CD8-positive, alpha-beta T cell (primary cell): ENCODE measurements at regions of chr6 and their contacts with region 1.

Region 1: GRCh38 chr6:26216356-26216885 is 129.2 kb downstream of the HFE start:
- DNase-seq: peak; percentile 61 to 96 (median 73)
- ATAC-seq: peak; percentile 79
- H3K4me3 ChIP-seq: peak overlapping the region; percentile 71 to 74
- H3K4me3 Mint-ChIP-seq: no peak overlapping the region
- H3K27ac ChIP-seq: peak overlapping the region; percentile 82 to 91
- H3K27ac Mint-ChIP-seq: no peak overlapping the region
- H3K4me1 ChIP-seq: peaks cover 19% of the 10 kb centered on the region
- H3K4me1 Mint-ChIP-seq: peaks cover 14% of the 10 kb centered on the region
- H3K27me3 ChIP-seq: no peaks in the 10 kb centered on the region
- H3K27me3 Mint-ChIP-seq: no peaks in the 10 kb centered on the region
- CTCF ChIP-seq: no peak

Region 2: DNA sequence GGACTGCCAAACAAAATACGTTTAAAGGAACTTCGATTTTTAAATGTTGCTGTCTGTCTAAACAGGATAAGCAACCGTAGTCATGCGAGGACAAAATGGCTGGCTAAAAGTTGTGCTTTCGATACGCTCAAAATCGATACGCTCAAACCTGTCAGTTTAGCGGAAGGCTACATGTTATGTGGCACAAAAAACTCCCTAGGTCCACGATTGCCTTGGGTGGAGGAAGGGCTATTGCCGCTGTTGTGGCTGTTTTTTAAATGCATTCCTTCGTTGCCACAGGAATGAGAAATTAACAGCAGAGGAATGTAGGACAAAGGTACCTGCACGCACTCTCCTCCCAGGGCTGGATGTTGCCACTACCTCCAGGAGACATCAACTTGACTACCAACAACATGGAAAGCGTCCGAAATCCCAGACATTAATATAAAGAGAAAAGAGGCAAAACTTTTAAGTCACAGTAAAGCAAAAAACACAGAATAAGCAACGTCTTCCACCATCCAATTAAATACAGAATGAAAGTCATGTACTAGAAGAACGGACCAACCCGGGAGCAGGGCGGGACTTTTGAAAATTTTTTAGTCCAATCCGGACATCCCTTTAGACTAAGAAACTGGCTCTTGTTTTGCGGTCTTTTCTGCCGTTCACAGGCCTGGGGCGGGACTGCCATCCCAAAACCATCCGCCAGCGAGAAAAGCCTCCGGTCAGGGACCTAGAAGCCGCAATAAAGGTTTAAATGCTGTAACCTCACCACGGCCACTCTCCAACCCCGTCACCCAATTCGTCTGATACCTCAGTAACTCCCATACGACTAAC is 161.4 kb before region 1 on chr6:
- CTCF ChIA-PET with region 1: no interaction called
- POLR2A ChIA-PET with region 1: interaction called, 21 read pairs
- intact Hi-C with region 1: no loop called
- DNase-seq: peak; percentile 71 to 94 (median 88)
- ATAC-seq: peak; percentile 72
- H3K4me3 ChIP-seq: peak overlapping the region; percentile 75 to 85
- H3K4me3 Mint-ChIP-seq: peak overlapping the region; percentile 96
- H3K27ac ChIP-seq: peak overlapping the region; percentile 85 to 96
- H3K27ac Mint-ChIP-seq: peak overlapping the region; percentile 99
- H3K4me1 ChIP-seq: peaks cover 17% of the 10 kb centered on the region
- H3K4me1 Mint-ChIP-seq: peaks cover 23% of the 10 kb centered on the region
- H3K27me3 ChIP-seq: no peaks in the 10 kb centered on the region
- H3K27me3 Mint-ChIP-seq: no peaks in the 10 kb centered on the region
- CTCF ChIP-seq: no peak

Region 3: DNA sequence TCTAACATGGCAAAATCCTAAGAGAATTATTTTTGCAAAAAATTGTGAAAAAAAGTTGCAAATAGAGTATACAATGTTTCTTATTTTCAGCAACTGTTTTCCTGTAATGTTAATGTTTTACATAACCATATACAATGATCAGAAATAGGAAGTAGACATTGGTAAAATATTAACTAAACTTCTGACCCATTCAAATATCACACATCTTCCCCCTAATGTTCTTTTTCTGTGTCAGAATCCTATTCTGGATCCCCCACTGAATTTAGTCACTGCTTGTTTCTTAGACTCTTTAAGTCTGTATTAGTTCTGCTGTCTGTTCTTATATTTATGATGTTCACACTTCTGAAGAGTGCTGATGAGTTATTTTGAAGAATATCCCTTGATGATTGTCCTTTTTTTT is 67.2 kb before region 1 on chr6:
- CTCF ChIA-PET with region 1: no interaction called
- POLR2A ChIA-PET with region 1: no interaction called
- intact Hi-C with region 1: no loop called
- DNase-seq: no peak
- ATAC-seq: no peak
- H3K4me3 ChIP-seq: no peak overlapping the region
- H3K4me3 Mint-ChIP-seq: no peak overlapping the region
- H3K27ac ChIP-seq: no peak overlapping the region
- H3K27ac Mint-ChIP-seq: no peak overlapping the region
- H3K4me1 ChIP-seq: no peaks in the 10 kb centered on the region
- H3K4me1 Mint-ChIP-seq: no peaks in the 10 kb centered on the region
- H3K27me3 ChIP-seq: no peaks in the 10 kb centered on the region
- H3K27me3 Mint-ChIP-seq: no peaks in the 10 kb centered on the region
- CTCF ChIP-seq: no peak

Region 4: DNA sequence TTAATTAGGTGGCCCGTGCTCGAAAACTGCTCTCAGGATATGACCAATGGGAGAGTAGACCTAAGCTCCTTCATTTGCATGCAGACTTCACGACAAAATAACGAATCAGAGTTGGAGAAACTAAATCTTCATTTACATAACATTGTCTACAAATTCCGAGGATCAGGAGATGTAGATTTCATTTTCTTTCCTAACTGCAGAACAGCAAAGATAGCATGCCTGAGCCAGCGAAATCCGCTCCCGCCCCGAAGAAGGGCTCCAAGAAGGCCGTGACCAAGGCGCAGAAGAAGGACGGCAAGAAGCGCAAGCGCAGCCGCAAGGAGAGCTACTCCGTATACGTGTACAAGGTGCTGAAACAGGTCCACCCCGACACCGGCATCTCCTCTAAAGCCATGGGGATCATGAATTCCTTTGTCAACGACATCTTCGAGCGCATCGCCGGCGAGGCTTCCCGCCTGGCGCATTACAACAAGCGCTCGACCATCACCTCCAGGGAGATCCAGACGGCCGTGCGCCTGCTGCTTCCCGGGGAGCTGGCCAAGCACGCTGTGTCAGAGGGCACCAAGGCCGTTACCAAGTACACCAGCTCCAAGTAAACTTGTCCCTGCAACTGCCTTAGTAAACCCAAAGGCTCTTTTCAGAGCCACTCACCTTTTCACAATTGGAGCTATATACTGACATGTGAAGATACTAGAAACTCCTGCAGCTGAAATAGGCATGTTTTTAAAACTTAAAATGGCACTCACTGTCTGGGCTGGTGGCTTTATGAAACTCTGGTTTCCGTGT is 32.6 kb before region 1 on chr6:
- CTCF ChIA-PET with region 1: interaction called, 21 read pairs
- POLR2A ChIA-PET with region 1: interaction called, 104 read pairs
- intact Hi-C with region 1: no loop called
- DNase-seq: peak in 7 of 9 experiments; percentile 33 to 90 (median 59)
- ATAC-seq: peak; percentile 88
- H3K4me3 ChIP-seq: peak overlapping the region; percentile 60 to 71
- H3K4me3 Mint-ChIP-seq: peak overlapping the region; percentile 100
- H3K27ac ChIP-seq: peak overlapping the region; percentile 61 to 76
- H3K27ac Mint-ChIP-seq: peak overlapping the region; percentile 99
- H3K4me1 ChIP-seq: peaks cover 20% of the 10 kb centered on the region
- H3K4me1 Mint-ChIP-seq: peaks cover 42% of the 10 kb centered on the region
- H3K27me3 ChIP-seq: no peaks in the 10 kb centered on the region
- H3K27me3 Mint-ChIP-seq: no peaks in the 10 kb centered on the region
- CTCF ChIP-seq: no peak

Region 5: DNA sequence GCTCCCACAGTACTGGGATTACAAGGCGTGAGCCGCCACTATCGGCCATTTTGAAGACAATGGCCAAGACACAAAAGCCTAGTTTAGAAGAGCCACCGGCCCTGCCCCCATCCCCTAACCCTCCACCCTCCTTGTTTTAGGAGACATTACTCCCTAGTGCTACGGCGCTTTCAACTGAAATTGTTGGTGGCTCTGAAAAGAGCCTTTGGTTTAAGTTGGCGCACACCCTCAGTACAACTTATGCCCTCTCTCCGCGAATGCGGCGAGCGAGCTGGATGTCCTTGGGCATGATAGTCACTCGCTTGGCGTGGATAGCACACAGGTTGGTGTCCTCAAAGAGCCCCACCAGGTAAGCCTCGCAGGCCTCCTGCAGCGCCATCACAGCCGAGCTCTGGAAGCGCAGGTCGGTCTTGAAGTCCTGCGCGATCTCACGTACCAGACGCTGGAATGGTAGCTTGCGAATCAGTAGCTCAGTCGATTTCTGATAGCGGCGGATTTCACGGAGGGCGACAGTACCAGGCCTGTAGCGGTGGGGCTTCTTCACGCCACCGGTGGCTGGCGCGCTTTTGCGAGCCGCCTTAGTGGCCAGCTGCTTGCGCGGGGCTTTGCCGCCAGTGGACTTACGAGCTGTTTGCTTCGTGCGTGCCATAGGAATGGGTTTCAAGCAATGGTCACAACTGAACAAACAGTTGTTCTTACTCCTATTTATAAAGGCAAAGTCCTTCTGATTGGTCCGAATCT is 33.7 kb after region 1 on chr6:
- CTCF ChIA-PET with region 1: interaction called, 17 read pairs
- POLR2A ChIA-PET with region 1: interaction called, 3 read pairs
- intact Hi-C with region 1: loop called (anchors 1 kb)
- DNase-seq: peak; percentile 59 to 91 (median 79)
- ATAC-seq: peak; percentile 77
- H3K4me3 ChIP-seq: peak overlapping the region; percentile 74 to 80
- H3K4me3 Mint-ChIP-seq: peak overlapping the region; percentile 90
- H3K27ac ChIP-seq: peak overlapping the region; percentile 73 to 83
- H3K27ac Mint-ChIP-seq: peak overlapping the region; percentile 96
- H3K4me1 ChIP-seq: peaks cover 15% of the 10 kb centered on the region
- H3K4me1 Mint-ChIP-seq: peaks cover 40% of the 10 kb centered on the region
- H3K27me3 ChIP-seq: no peaks in the 10 kb centered on the region
- H3K27me3 Mint-ChIP-seq: no peaks in the 10 kb centered on the region
- CTCF ChIP-seq: peak; percentile 57

Region 6: DNA sequence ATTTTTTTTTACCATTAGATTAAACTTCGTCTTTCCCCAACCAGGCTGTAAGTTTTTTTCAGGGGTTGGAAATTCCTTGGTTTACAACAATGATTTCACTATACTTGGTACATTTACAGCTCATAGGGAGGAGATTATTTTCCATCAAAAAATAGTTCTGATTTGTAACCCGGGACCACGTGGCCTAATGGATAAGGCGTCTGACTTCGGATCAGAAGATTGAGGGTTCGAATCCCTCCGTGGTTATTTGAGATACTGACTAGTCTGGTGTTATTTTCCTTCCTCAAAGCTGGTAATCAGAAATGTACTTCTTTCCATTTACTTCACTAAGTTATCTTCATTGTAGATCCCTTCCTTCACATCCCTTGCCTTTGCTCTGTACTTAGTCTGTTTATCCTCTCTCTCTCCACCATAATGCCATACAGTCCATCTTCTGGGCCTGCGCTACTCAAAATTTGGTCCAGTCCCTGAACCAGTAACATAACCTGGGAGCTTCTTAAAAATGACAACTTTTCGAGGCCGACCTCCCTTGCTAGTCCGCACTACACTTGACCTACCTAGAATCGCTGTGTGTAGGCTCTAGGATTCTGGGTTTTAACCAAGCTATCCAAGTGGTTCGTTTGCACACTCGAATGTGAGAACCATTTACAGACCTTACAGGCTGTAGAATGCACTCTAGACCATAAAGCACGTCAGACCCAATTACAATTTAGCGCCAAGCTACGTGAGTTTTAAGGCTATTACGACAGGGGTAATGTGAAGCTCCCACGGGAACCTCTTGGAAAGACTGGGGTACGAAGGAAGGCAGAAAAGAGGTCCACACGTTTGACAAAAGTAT is 106.4 kb after region 1 on chr6:
- CTCF ChIA-PET with region 1: interaction called, 4 read pairs
- POLR2A ChIA-PET with region 1: interaction called, 12 read pairs
- intact Hi-C with region 1: no loop called
- DNase-seq: peak in 8 of 9 experiments; percentile 32 to 86 (median 58)
- ATAC-seq: peak; percentile 65
- H3K4me3 ChIP-seq: peak overlapping the region; percentile 55 to 64
- H3K4me3 Mint-ChIP-seq: peak overlapping the region; percentile 88
- H3K27ac ChIP-seq: no peak overlapping the region
- H3K27ac Mint-ChIP-seq: peak overlapping the region; percentile 90
- H3K4me1 ChIP-seq: peaks cover 5% of the 10 kb centered on the region
- H3K4me1 Mint-ChIP-seq: peaks cover 24% of the 10 kb centered on the region
- H3K27me3 ChIP-seq: peaks cover 0 to 2% of the 10 kb centered on the region in 2 experiments
- H3K27me3 Mint-ChIP-seq: peaks cover 15% of the 10 kb centered on the region
- CTCF ChIP-seq: no peak

Region 7: DNA sequence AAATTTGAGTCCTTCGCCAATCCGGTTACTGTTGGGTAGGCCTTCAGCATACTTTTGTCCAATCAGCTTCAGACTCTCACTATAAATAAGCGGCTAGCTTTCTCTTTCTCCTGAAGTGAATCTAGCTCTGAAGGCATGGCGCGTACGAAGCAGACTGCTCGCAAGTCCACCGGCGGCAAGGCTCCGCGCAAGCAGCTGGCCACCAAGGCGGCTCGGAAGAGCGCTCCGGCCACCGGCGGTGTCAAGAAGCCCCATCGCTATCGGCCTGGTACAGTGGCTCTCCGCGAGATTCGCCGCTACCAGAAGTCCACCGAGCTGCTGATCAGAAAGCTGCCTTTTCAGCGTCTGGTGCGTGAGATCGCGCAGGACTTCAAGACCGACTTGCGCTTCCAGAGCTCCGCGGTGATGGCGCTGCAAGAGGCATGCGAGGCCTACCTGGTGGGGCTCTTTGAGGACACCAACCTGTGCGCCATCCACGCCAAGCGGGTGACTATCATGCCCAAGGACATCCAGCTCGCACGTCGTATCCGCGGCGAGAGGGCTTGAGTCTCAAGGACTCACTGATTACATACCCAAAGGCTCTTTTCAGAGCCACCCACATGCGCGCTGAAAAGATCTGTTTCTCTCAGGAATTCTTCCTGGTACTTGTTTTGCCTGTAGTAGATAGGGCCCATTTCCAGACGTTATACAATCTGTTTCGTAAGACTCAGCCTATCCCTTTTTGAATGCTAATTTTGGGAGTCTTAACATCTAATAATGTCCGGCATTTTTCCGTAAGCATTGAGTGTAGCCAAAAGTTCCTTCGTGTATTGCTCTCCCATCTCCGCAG is 1593.7 kb after region 1 on chr6:
- CTCF ChIA-PET with region 1: no interaction called
- POLR2A ChIA-PET with region 1: interaction called, 11 read pairs
- intact Hi-C with region 1: no loop called
- DNase-seq: peak; percentile 63 to 96 (median 74)
- ATAC-seq: peak; percentile 60
- H3K4me3 ChIP-seq: peak overlapping the region; percentile 52 to 65
- H3K4me3 Mint-ChIP-seq: peak overlapping the region; percentile 95
- H3K27ac ChIP-seq: peak overlapping the region; percentile 83 to 87
- H3K27ac Mint-ChIP-seq: peak overlapping the region; percentile 99
- H3K4me1 ChIP-seq: peaks cover 36% of the 10 kb centered on the region
- H3K4me1 Mint-ChIP-seq: peaks cover 57% of the 10 kb centered on the region
- H3K27me3 ChIP-seq: no peaks in the 10 kb centered on the region
- H3K27me3 Mint-ChIP-seq: no peaks in the 10 kb centered on the region
- CTCF ChIP-seq: no peak